Aorta (tissue), 5 donors: ENCODE measurements at regions of chr13 and their contacts with region 1.

Region 1: GRCh38 chr13:111066544-111066943 is 48.6 kb upstream of the ARHGEF7 start:
- DNase-seq: no peak
- ATAC-seq: no peak
- H3K4me3 ChIP-seq: no peak overlapping the region
- H3K27ac ChIP-seq: no peak overlapping the region
- H3K4me1 ChIP-seq: no peaks in the 10 kb centered on the region
- H3K27me3 ChIP-seq: no peaks in the 10 kb centered on the region

Region 2: DNA sequence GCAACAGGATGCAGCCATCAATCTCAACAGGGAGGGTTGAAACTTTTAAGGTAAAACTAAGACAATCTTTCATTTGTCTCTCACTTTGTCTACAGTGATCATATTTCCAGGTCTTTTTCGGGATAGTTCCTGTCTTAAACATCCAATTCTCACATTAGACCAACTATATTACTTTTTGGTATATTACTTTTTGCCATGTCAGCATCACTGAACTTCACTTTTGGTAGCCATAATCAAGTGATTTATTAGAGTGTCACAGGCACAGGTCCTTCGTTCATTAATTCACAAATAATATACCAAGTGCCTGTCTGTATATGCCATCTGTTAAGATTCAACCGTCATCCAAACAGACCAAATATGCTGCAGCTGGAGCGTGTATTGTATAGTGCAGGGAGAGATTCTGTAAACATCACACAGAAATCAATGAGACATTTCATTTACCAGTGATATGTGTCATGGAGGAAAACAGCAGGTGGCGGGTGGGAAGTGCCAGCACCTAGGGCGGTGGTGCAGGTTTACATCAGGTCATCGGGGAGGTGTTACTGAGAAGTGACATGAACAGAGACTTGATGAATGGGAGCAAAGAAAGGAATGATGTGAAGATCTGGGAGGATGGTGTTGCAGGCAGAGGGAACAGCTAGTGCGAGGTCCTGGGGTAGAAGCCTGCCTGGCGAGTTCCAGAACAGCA is 73.5 kb after region 1 on chr13:
- intact Hi-C with region 1: no loop called
- DNase-seq: no peak
- ATAC-seq: no peak
- H3K4me3 ChIP-seq: no peak overlapping the region
- H3K27ac ChIP-seq: no peak overlapping the region
- H3K4me1 ChIP-seq: peaks cover 0 to 6% of the 10 kb centered on the region in 2 donors
- H3K27me3 ChIP-seq: no peaks in the 10 kb centered on the region

Region 3: DNA sequence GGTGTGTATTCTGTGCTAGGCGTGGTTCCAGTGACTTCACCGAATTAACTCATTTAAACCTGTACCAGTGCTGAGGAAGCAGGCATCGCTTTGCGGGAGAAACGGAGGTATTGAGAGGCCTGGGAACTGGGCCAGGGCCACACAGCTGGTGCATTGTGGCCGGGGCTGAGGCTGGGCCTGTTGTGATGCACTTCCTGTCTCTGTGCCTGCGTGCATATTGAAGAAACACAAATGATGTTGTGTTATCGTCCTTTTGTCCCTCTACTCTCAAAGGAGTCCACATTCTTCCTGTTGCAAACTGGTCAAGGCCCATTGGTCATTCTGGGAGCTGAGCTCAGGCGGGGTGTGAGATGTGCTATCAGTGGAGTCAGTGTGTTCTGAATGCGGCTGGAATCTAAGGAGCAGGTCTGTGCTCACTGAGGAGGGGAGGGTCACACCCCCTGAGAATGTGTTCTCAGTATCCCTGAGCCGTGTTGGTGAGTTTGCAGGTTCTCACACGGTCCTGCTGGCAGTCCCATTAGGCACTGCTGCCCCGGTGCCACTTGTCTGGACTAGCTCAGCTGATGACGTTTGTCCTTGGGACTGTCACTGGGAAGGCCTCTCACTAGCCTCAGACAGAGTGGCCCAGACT is 110.7 kb after region 1 on chr13:
- intact Hi-C with region 1: no loop called
- DNase-seq: peak in 1 of 2 donors; percentile 75
- ATAC-seq: peak; percentile 65
- H3K4me3 ChIP-seq: no peak overlapping the region
- H3K27ac ChIP-seq: peak overlapping the region; percentile 99 to 100
- H3K4me1 ChIP-seq: peaks cover 9 to 13% of the 10 kb centered on the region in 2 donors
- H3K27me3 ChIP-seq: no peaks in the 10 kb centered on the region

Region 4: DNA sequence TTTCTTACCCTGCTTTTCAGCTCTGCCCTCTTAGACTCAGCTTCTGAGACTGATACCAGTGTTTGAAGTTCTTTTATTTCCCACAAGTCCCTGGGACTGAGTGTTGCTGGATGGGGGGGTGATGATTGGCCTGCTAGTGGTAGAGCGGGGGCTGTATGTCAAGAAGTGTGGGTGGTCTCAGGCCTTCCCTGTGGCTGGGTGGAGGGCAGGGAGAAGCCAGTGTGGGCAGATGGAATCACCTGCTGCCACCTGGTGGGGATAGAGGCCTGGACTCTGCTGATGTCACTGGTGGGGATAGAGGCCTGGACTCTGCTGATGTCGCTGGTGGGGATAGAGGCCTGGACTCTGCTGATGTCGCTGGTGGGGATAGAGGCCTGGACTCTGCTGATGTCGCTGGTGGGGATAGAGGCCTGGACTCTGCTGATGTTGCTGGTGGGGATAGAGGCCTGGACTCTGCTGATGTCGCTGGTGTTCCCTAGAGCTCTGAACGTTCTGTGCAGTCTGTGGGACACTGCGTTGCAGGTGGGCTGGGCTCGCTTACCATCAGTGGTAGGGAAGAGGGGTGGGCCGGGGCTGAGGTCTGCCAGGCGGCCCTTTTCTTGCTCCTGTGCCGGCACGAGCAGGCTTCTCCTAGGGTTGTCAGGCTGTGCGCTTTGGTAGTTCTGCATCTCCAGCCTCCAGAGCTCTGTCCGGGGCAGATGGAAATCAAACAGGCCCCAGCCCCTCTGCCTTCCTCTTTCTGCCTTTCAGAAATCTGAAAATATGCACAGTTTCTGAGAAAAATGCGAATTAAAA is 149.8 kb after region 1 on chr13:
- intact Hi-C with region 1: loop called in 1 of 2 experiments (anchors 2 kb)
- DNase-seq: peak in 1 of 2 donors; percentile 82
- ATAC-seq: no peak
- H3K4me3 ChIP-seq: no peak overlapping the region
- H3K27ac ChIP-seq: peak overlapping the region in 1 of 2 donors; percentile 49
- H3K4me1 ChIP-seq: peaks cover 0 to 4% of the 10 kb centered on the region in 2 donors
- H3K27me3 ChIP-seq: no peaks in the 10 kb centered on the region

Region 5: GRCh38 chr13:111458739-111459138 is 392.2 kb after region 1 on chr13:
- intact Hi-C with region 1: loop called in 1 of 2 experiments (anchors 10 kb)
- DNase-seq: no peak
- ATAC-seq: no peak
- H3K4me3 ChIP-seq: no peak overlapping the region
- H3K27ac ChIP-seq: no peak overlapping the region
- H3K4me1 ChIP-seq: no peaks in the 10 kb centered on the region
- H3K27me3 ChIP-seq: no peaks in the 10 kb centered on the region